Naive thymus-derived CD8-positive, alpha-beta T cell (primary cell): ENCODE measurements at regions of chr7 and their contacts with region 1.

Region 1: GRCh38 chr7:150716368-150716767 is at the start of gene GIMAP1:
- DNase-seq: peak; percentile 39 to 85 (median 68)
- ATAC-seq: peak; percentile 81 to 91
- H3K4me3 Mint-ChIP-seq: peak within 1 kb of the TSS; percentile 92 to 100 (median 97)
- H3K27ac Mint-ChIP-seq: peak within 1 kb of the TSS; percentile 89 to 99 (median 98)
- H3K4me1 Mint-ChIP-seq: peaks cover 40 to 69% (median 66%) of the 10 kb centered on the region in 4 donors
- H3K27me3 Mint-ChIP-seq: no peaks in the 10 kb centered on the region
- polyA plus RNA-seq, gene GIMAP1: 48.0 to 87.4 (median 67.1) TPM

Region 2: GRCh38 chr7:150356265-150356897 is 360.0 kb before region 1 on chr7:
- POLR2A ChIA-PET with region 1: no interaction called
- DNase-seq: peak in 3 of 10 donors; percentile 62 to 64 (median 63)
- ATAC-seq: peak in 1 of 2 donors; percentile 19
- H3K4me3 Mint-ChIP-seq: peak overlapping the region in 5 of 10 donors; percentile 8 to 34 (median 18)
- H3K27ac Mint-ChIP-seq: peak overlapping the region in 9 of 10 donors; percentile 4 to 79 (median 63)
- H3K4me1 Mint-ChIP-seq: peaks cover 21 to 40% (median 35%) of the 10 kb centered on the region in 4 donors
- H3K27me3 Mint-ChIP-seq: no peaks in the 10 kb centered on the region

Region 3: GRCh38 chr7:150481186-150481920 is 235.0 kb before region 1 on chr7:
- POLR2A ChIA-PET with region 1: interaction called, 24 read pairs
- DNase-seq: peak; percentile 25 to 76 (median 63)
- ATAC-seq: peak; percentile 51 to 69
- H3K4me3 Mint-ChIP-seq: peak overlapping the region; percentile 71 to 97 (median 88)
- H3K27ac Mint-ChIP-seq: peak overlapping the region; percentile 98 to 100 (median 100)
- H3K4me1 Mint-ChIP-seq: peaks cover 57 to 98% (median 94%) of the 10 kb centered on the region in 4 donors
- H3K27me3 Mint-ChIP-seq: no peaks in the 10 kb centered on the region

Region 4: DNA sequence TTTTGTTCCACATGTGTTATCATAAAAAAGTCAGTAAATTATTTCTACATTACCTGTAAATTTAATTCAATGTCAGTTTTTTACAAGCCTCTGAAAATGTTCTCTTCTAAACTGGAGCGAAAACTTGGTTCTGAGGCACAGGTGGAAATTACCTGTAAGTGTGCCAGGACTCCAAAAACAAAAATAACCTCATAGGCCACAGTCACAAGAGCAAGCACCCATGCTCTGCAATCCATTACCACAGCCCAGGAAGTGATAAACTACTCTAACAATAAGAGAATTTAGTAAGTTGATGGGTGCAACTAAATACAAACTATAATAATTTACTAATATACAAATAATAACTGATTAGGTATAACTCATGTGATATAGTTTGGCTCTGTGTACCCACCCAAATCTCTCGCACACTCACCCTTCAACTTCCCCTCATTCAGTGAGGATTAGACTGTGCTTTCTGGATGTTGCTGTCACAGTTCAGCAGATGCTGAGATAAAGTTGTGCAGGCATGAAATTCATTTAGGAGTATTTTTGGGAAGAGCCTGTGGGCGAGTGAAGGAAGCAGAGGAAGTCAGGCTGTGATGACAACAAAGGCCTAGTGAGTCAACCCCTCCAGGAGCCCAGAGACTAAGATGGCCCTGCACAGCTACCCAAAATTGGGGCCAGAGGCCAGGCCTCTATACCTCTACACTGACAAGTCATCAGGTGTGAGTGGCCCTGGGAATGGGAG is 67.9 kb before region 1 on chr7:
- POLR2A ChIA-PET with region 1: interaction called, 12 read pairs
- DNase-seq: peak in 2 of 10 donors; percentile 49 to 53
- ATAC-seq: peak; percentile 85 to 87
- H3K4me3 Mint-ChIP-seq: peak overlapping the region in 9 of 10 donors; percentile 43 to 75 (median 57)
- H3K27ac Mint-ChIP-seq: peak overlapping the region; percentile 82 to 94 (median 88)
- H3K4me1 Mint-ChIP-seq: peaks cover 16 to 77% (median 55%) of the 10 kb centered on the region in 4 donors
- H3K27me3 Mint-ChIP-seq: no peaks in the 10 kb centered on the region

Region 5: GRCh38 chr7:150675714-150676113 is 40.7 kb before region 1 on chr7:
- POLR2A ChIA-PET with region 1: interaction called, 122 read pairs
- DNase-seq: no peak
- ATAC-seq: no peak
- H3K4me3 Mint-ChIP-seq: peak overlapping the region; percentile 16 to 81 (median 61)
- H3K27ac Mint-ChIP-seq: peak overlapping the region; percentile 91 to 99 (median 95)
- H3K4me1 Mint-ChIP-seq: peaks cover 24 to 80% (median 77%) of the 10 kb centered on the region in 4 donors
- H3K27me3 Mint-ChIP-seq: no peaks in the 10 kb centered on the region

Region 6: GRCh38 chr7:150695654-150696053 is 20.7 kb before region 1 on chr7:
- POLR2A ChIA-PET with region 1: interaction called, 273 read pairs
- DNase-seq: no peak
- ATAC-seq: no peak
- H3K4me3 Mint-ChIP-seq: no peak overlapping the region
- H3K27ac Mint-ChIP-seq: peak overlapping the region in 2 of 10 donors; percentile 27 to 58
- H3K4me1 Mint-ChIP-seq: peaks cover 1 to 28% (median 15%) of the 10 kb centered on the region in 4 donors
- H3K27me3 Mint-ChIP-seq: no peaks in the 10 kb centered on the region

Region 7: GRCh38 chr7:150753826-150754603 is 37.6 kb after region 1 on chr7:
- POLR2A ChIA-PET with region 1: interaction called, 234 read pairs
- DNase-seq: peak in 1 of 10 donors; percentile 60
- ATAC-seq: peak in 1 of 2 donors; percentile 10
- H3K4me3 Mint-ChIP-seq: peak overlapping the region in 9 of 10 donors; percentile 36 to 78 (median 63)
- H3K27ac Mint-ChIP-seq: peak overlapping the region; percentile 66 to 97 (median 94)
- H3K4me1 Mint-ChIP-seq: peaks cover 35 to 77% (median 71%) of the 10 kb centered on the region in 4 donors
- H3K27me3 Mint-ChIP-seq: peaks cover 0 to 2% (median 0%) of the 10 kb centered on the region in 5 donors